AG04450 (cell line): ENCODE measurements at regions of chr20 and their contacts with region 1.

Region 1: GRCh38 chr20:31723319-31724078 is 831 bp upstream of the BCL2L1 start:
- DNase-seq: peak; percentile 96
- H3K4me3 ChIP-seq: peak overlapping the region; percentile 84
- H3K27ac ChIP-seq: peak overlapping the region; percentile 98
- H3K27me3 ChIP-seq: no peaks in the 10 kb centered on the region
- CTCF ChIP-seq: peak; percentile 93

Region 2: DNA sequence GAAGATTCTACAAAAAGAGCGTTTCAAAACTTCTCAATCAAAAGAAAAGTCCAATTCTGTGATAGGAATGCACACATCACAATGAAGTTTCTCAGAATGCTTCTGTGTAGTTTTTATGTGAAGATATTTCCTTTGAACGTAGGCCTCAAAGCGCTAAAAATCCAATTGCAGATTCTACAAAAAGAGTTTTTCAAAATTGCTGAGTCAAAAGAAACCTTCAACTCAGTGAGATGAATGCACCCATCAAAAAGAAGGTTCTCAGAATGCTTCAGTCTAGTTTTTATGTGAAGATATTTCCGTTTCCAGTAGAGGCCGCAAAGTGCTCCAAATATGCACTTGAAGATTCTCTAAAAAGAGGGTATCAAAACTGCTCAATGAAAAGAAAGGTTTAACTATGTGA is 785.7 kb before region 1 on chr20:
- CTCF ChIA-PET with region 1: no interaction called
- POLR2A ChIA-PET with region 1: no interaction called
- DNase-seq: no peak
- H3K4me3 ChIP-seq: no peak overlapping the region
- H3K27ac ChIP-seq: no peak overlapping the region
- H3K27me3 ChIP-seq: no peaks in the 10 kb centered on the region
- CTCF ChIP-seq: no peak

Region 3: GRCh38 chr20:31572701-31573554 is 150.6 kb before region 1 on chr20:
- CTCF ChIA-PET with region 1: interaction called, 17 read pairs
- POLR2A ChIA-PET with region 1: no interaction called
- DNase-seq: peak; percentile 97
- H3K4me3 ChIP-seq: peak overlapping the region; percentile 57
- H3K27ac ChIP-seq: peak overlapping the region; percentile 95
- H3K27me3 ChIP-seq: no peaks in the 10 kb centered on the region
- CTCF ChIP-seq: no peak

Region 4: DNA sequence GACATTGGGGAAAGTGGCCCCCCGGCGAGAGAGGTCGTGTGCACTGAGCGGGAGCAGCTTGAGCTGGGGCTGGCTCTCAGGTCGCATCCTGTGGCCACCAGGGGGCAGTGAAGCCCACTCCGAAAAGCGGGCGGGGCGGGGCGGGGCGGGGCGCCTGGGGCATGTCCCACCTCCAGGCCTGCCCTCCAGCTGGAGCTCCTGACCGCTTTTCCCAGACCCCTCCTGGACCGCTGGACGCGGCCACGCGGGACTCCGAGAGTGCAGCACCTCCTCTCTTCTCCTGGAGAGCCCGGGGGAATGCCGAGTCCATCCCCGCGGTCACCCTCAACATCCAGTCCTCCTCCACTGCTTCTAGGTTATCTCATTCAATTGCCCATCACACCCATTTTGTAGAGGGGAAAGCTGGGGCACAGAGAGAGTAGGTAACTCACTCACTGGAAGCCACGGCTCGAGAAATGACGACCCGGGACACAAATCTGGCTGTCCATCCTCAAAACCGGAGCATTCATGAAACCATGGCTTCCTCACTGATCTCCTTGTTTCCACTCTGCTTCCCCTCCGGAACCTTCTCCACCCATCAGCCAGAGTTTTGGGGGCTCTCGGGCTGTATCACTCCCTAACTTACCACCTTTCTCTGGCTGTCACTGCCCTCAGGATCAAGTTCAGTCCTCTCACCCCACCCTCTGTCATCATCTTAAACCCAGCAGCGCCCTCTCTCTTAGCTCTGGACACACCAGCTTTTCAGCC is 61.7 kb before region 1 on chr20:
- CTCF ChIA-PET with region 1: interaction called, 380 read pairs
- POLR2A ChIA-PET with region 1: interaction called, 60 read pairs
- DNase-seq: no peak
- H3K4me3 ChIP-seq: peak overlapping the region; percentile 48
- H3K27ac ChIP-seq: peak overlapping the region; percentile 47
- H3K27me3 ChIP-seq: no peaks in the 10 kb centered on the region
- CTCF ChIP-seq: peak; percentile 62

Region 5: GRCh38 chr20:31691646-31692275 is 31.7 kb before region 1 on chr20:
- CTCF ChIA-PET with region 1: interaction called, 77 read pairs
- POLR2A ChIA-PET with region 1: no interaction called
- DNase-seq: no peak
- H3K4me3 ChIP-seq: no peak overlapping the region
- H3K27ac ChIP-seq: no peak overlapping the region
- H3K27me3 ChIP-seq: no peaks in the 10 kb centered on the region
- CTCF ChIP-seq: no peak

Region 6: GRCh38 chr20:31712564-31713311 is 10.8 kb before region 1 on chr20:
- CTCF ChIA-PET with region 1: interaction called, 45 read pairs
- POLR2A ChIA-PET with region 1: interaction called, 25 read pairs
- DNase-seq: peak; percentile 67
- H3K4me3 ChIP-seq: peak overlapping the region; percentile 34
- H3K27ac ChIP-seq: peak overlapping the region; percentile 95
- H3K27me3 ChIP-seq: no peaks in the 10 kb centered on the region
- CTCF ChIP-seq: no peak

Region 7: DNA sequence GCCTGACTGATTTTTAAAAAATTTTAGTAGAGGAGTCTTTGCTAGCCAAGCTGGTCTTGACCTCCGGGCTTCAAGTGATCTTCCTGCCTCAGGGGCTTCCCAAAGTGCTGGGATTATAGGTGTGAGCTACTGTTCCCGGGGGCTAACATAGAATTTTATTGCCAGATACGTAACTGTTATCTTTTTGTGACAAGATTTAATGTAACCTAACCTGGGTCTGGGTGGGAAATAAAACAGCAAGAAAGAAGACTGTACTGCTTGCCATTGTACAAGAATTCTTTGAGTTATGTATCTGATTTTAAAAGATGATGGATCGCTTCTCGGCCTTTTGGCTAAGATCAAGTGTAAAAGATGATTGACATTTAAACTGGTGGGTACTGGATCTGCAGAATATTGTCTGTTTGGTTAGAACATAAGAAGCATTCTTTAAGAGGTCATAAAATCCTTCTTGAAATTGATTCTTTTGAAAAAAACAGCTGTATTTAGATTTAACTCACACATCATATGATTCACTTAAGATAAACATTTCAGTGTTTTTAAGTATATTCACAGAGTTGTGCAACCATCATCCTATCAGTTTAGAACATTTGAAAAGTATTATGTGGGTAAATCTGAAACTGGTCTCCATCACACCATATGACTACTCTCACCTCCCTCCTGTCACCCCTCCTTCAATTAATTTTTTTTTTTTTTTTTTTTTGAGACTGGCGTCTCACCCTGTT is 37.2 kb after region 1 on chr20:
- CTCF ChIA-PET with region 1: interaction called, 13 read pairs
- POLR2A ChIA-PET with region 1: interaction called, 3 read pairs
- DNase-seq: peak; percentile 51
- H3K4me3 ChIP-seq: no peak overlapping the region
- H3K27ac ChIP-seq: peak overlapping the region; percentile 90
- H3K27me3 ChIP-seq: no peaks in the 10 kb centered on the region
- CTCF ChIP-seq: no peak